ENCODE measurements at regions of chr3 and their contacts with region 1.

Region 1: DNA sequence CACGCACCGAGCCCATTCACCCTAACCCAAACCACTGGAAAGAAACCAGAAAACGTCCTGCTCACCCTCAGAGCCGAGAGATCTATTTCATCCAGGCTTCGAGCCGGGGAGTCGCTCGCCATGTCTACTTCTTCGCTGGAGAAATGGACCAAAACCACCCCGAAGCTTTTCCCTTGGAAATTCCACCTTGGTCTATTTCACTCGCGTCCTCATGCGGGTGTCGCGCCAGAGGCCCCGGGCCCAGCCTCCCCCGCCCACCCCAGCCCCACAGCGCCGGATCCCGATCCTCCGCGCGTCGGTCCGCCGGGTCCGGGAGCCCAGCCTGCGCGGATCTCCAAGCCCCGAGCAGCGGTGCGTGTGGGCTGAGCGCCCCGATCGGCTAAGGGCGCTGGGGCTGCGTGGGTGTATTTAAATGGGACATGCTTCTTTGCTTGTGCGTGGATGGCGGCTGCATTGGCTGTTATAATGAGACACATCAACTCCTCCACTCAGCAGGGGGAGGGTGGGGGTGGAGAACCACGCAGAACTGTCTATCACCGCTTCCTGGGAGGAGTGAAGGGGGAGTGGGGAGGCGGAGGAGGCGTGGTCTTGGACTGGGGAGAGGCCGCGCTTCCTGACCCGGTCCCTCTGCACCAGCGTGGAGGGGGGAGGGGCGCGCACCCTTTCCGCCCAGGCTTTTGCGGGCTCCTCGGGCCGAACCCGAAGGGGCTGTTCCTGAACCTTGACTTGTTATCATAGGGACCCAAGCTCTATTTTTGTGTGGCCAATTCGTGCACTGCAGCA is at the start of gene TNIK:
- DNase-seq: peak; percentile 92 to 94
- H3K4me3 ChIP-seq: peak within 1 kb of the TSS; percentile 83 to 92
- H3K27ac ChIP-seq: peak within 1 kb of the TSS; percentile 77 to 81
- H3K4me1 ChIP-seq: peaks cover 0 to 25% (median 8%) of the 10 kb centered on the region in 4 donors
- H3K27me3 ChIP-seq: no peaks in the 10 kb centered on the region
- CTCF ChIP-seq: peak; percentile 41 to 48

Region 2: GRCh38 chr3:171187706-171188290 is 272.3 kb before region 1 on chr3:
- intact Hi-C with region 1: loop called (anchors 5 kb)
- DNase-seq: no peak
- H3K4me3 ChIP-seq: no peak overlapping the region
- H3K27ac ChIP-seq: no peak overlapping the region
- H3K4me1 ChIP-seq: peaks cover 0 to 33% (median 8%) of the 10 kb centered on the region in 4 donors
- H3K27me3 ChIP-seq: no peaks in the 10 kb centered on the region
- CTCF ChIP-seq: peak; percentile 39 to 41

Region 3: GRCh38 chr3:171347301-171348039 is 112.7 kb before region 1 on chr3:
- intact Hi-C with region 1: loop called (anchors 10 kb)
- DNase-seq: no peak
- H3K4me3 ChIP-seq: no peak overlapping the region
- H3K27ac ChIP-seq: peak overlapping the region; percentile 47 to 48
- H3K4me1 ChIP-seq: peaks cover 0 to 43% (median 11%) of the 10 kb centered on the region in 4 donors
- H3K27me3 ChIP-seq: no peaks in the 10 kb centered on the region
- CTCF ChIP-seq: no peak

Measured in tibial artery (tissue), 4 donors.